Activated CD8-positive, alpha-beta T cell treated with anti-CD3 and anti-CD28 coated beads, Interleukin-2, amount 10 ng/mL, durations not matched to agents 7 days and 5 days (primary cell): ENCODE measurements at regions of chr11 and their contacts with region 1.

Region 1: GRCh38 chr11:108467091-108467823 is at the start of gene C11orf65:
- DNase-seq: peak; percentile 97
- ATAC-seq: peak; percentile 99
- H3K4me3 Mint-ChIP-seq: peak within 1 kb of the TSS; percentile 97
- H3K27ac Mint-ChIP-seq: peak within 1 kb of the TSS; percentile 100
- H3K4me1 Mint-ChIP-seq: peaks cover 18% of the 10 kb centered on the region
- H3K27me3 Mint-ChIP-seq: no peaks in the 10 kb centered on the region
- total RNA-seq, gene C11orf65: 0.74 to 0.83 TPM

Region 2: DNA sequence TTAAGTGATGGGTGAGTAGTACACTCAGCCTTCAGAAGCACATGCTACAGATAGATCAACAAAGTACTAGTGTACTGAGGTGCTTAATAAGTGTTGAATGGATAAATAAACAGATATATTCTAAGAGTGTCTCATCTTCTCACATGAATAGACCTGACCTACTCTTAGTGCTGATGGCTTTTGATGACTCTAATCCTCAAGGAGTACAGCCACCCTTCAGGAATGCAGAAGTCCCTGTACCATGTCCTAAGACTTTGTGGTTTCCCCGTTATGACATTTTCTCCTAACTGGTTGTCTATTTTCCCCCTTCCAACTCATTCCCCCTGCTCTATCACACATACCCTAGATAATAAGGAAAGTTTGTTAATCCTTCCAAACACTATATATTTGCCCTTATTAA is 61.6 kb before region 1 on chr11:
- CTCF ChIA-PET with region 1: no interaction called
- POLR2A ChIA-PET with region 1: no interaction called
- DNase-seq: no peak
- ATAC-seq: no peak
- H3K4me3 Mint-ChIP-seq: no peak overlapping the region
- H3K27ac Mint-ChIP-seq: no peak overlapping the region
- H3K4me1 Mint-ChIP-seq: no peaks in the 10 kb centered on the region
- H3K27me3 Mint-ChIP-seq: no peaks in the 10 kb centered on the region

Region 3: GRCh38 chr11:108453207-108453835 is 13.9 kb before region 1 on chr11:
- CTCF ChIA-PET with region 1: no interaction called
- POLR2A ChIA-PET with region 1: no interaction called
- DNase-seq: no peak
- ATAC-seq: no peak
- H3K4me3 Mint-ChIP-seq: no peak overlapping the region
- H3K27ac Mint-ChIP-seq: no peak overlapping the region
- H3K4me1 Mint-ChIP-seq: peaks cover 4% of the 10 kb centered on the region
- H3K27me3 Mint-ChIP-seq: no peaks in the 10 kb centered on the region

Region 4: GRCh38 chr11:108497317-108498045 is 30.2 kb after region 1 on chr11:
- CTCF ChIA-PET with region 1: no interaction called
- POLR2A ChIA-PET with region 1: interaction called, 16 read pairs
- DNase-seq: peak; percentile 75
- ATAC-seq: peak; percentile 83
- H3K4me3 Mint-ChIP-seq: peak overlapping the region; percentile 92
- H3K27ac Mint-ChIP-seq: peak overlapping the region; percentile 97
- H3K4me1 Mint-ChIP-seq: peaks cover 33% of the 10 kb centered on the region
- H3K27me3 Mint-ChIP-seq: no peaks in the 10 kb centered on the region

Region 5: GRCh38 chr11:108511851-108512474 is 44.7 kb after region 1 on chr11:
- CTCF ChIA-PET with region 1: no interaction called
- POLR2A ChIA-PET with region 1: no interaction called
- DNase-seq: no peak
- ATAC-seq: no peak
- H3K4me3 Mint-ChIP-seq: no peak overlapping the region
- H3K27ac Mint-ChIP-seq: no peak overlapping the region
- H3K4me1 Mint-ChIP-seq: peaks cover 3% of the 10 kb centered on the region
- H3K27me3 Mint-ChIP-seq: no peaks in the 10 kb centered on the region